ENCODE measurements at regions of chr2 and their contacts with region 1.

Region 1: DNA sequence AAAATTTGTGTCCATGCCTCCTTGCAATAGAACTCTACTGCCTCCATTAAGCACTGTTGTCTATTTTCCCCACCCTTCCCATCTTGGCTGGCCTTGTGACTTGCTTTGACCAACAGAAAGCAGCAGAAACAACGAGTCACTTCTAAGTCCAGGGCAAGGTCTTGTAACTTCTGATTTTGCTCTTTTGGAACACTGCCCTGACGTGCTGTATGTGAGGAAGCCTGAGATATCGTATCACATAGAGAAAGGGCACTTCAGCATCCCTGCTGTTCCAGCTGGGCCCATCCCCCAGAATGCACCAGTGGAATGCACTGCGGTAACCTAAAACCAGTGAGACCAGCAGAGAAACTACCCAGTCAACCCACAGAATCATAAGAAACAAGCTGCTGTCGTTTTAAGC is 28.1 kb downstream of the NCKAP1 start:
- DNase-seq: no peak
- H3K4me3 ChIP-seq: no peak overlapping the region
- H3K27ac ChIP-seq: no peak overlapping the region
- H3K4me1 ChIP-seq: no peaks in the 10 kb centered on the region
- H3K27me3 ChIP-seq: no peaks in the 10 kb centered on the region
- CTCF ChIP-seq: no peak

Region 2: GRCh38 chr2:182792441-182792840 is 217.7 kb before region 1 on chr2:
- CTCF ChIA-PET with region 1: interaction called, 16 read pairs
- POLR2A ChIA-PET with region 1: no interaction called
- intact Hi-C with region 1: no loop called
- DNase-seq: no peak
- H3K4me3 ChIP-seq: no peak overlapping the region
- H3K27ac ChIP-seq: no peak overlapping the region
- H3K4me1 ChIP-seq: no peaks in the 10 kb centered on the region
- H3K27me3 ChIP-seq: no peaks in the 10 kb centered on the region
- CTCF ChIP-seq: no peak

Measured in PC-9 (cell line).